ENCODE measurements at regions of chr4 and their contacts with region 1.

Region 1: GRCh38 chr4:104966349-104967033 is 180.2 kb upstream of the TET2 start:
- DNase-seq: peak; percentile 82
- H3K4me3 Mint-ChIP-seq: peak overlapping the region; percentile 71
- H3K27ac Mint-ChIP-seq: peak overlapping the region; percentile 87
- H3K4me1 Mint-ChIP-seq: peaks cover 10% of the 10 kb centered on the region
- H3K27me3 Mint-ChIP-seq: peaks cover 3% of the 10 kb centered on the region

Region 2: DNA sequence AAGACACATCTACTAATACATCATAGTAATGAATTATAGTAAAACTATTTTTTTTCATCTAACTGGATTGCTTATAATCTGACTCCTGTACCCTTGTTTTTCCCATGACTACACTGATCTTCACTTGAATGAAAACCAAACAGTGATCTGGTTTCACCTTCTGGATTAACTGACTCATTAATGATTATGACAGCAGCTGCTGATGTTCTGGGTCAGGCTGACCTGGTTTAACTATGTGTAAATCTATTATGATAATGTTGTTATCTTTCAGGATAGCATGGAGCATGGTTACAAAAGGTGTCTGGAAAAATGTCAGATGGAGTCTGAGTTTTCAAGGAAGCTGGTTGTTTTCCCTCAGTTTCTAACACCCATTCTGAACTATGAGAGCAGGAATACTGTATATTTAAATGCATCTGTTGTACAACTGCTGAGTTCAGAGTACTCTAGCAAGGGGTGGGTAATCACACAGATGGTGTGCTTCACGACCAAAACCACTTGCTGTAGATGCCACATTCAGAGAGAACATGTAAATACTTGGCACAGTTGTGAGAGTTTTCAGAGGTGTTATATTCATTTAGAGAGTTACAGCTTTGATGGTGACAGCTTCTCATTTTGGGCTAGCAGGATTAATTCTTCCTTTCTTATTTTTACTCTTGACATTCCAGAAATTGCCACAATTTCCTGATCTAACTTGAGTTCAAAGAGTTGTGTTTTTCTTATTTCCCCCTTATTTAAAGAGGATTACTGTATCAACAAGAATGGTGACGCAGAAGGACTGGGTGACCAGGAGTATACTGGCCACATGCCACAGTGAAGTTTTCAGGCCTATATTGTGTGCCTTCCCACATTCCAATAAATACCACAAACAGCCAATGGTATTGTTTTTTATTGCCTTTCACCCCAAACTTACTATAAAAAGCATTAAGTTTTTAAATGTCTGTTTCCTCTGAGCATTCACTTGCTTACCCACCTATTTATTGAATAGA is 69.5 kb before region 1 on chr4:
- intact Hi-C with region 1: loop called (anchors 2 kb)
- DNase-seq: no peak
- H3K4me3 Mint-ChIP-seq: no peak overlapping the region
- H3K27ac Mint-ChIP-seq: no peak overlapping the region
- H3K4me1 Mint-ChIP-seq: peaks cover 3% of the 10 kb centered on the region
- H3K27me3 Mint-ChIP-seq: no peaks in the 10 kb centered on the region

Region 3: DNA sequence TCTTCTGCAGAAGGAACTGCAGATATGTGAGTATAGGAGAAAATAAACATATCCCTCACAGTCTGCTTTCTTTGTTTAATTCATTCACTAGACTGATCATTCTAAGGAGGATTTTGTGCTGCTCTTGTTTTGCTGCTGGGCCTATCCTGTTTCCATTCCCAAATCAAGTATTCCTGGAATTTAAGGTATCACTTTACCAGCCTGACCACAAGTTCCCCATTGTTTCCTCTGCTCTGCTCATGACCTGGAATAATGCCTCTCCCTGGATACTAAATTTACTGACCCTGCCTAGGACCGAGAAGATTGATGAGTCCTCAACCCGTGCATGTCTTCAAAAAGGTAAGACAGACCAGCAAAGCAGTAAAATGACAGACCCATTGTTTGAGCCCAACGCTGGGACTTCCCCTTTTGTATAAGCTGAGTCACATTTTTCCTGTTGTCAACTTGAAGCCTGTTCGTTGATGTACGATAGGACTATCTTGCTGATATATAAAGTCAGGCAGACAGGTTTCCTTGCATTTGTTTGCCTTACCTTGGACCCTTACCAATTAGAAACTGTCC is 94.7 kb after region 1 on chr4:
- intact Hi-C with region 1: loop called (anchors 1 kb)
- DNase-seq: peak; percentile 81
- H3K4me3 Mint-ChIP-seq: peak overlapping the region; percentile 70
- H3K27ac Mint-ChIP-seq: peak overlapping the region; percentile 94
- H3K4me1 Mint-ChIP-seq: peaks cover 35% of the 10 kb centered on the region
- H3K27me3 Mint-ChIP-seq: peaks cover 1% of the 10 kb centered on the region

Region 4: GRCh38 chr4:105191621-105192210 is 225.2 kb after region 1 on chr4:
- intact Hi-C with region 1: loop called (anchors 10 kb)
- DNase-seq: no peak
- H3K4me3 Mint-ChIP-seq: peak overlapping the region; percentile 8
- H3K27ac Mint-ChIP-seq: peak overlapping the region; percentile 79
- H3K4me1 Mint-ChIP-seq: peaks cover 45% of the 10 kb centered on the region
- H3K27me3 Mint-ChIP-seq: no peaks in the 10 kb centered on the region

Region 5: GRCh38 chr4:105215609-105216313 is 249.3 kb after region 1 on chr4:
- intact Hi-C with region 1: loop called (anchors 5 kb)
- DNase-seq: no peak
- H3K4me3 Mint-ChIP-seq: peak overlapping the region; percentile 42
- H3K27ac Mint-ChIP-seq: peak overlapping the region; percentile 63
- H3K4me1 Mint-ChIP-seq: peaks cover 12% of the 10 kb centered on the region
- H3K27me3 Mint-ChIP-seq: no peaks in the 10 kb centered on the region

Region 6: GRCh38 chr4:105708530-105709391 is 742.3 kb after region 1 on chr4 and contains the starts of genes GSTCD and INTS12:
- intact Hi-C with region 1: loop called (anchors 5 kb)
- DNase-seq: peak; percentile 96
- H3K4me3 Mint-ChIP-seq: peak within 1 kb of the TSS; percentile 99
- H3K27ac Mint-ChIP-seq: peak within 1 kb of the TSS; percentile 94
- H3K4me1 Mint-ChIP-seq: peaks cover 15% of the 10 kb centered on the region
- H3K27me3 Mint-ChIP-seq: no peaks in the 10 kb centered on the region
- total RNA-seq, gene GSTCD: 17.5 and 22.0 TPM in 2 replicates
- total RNA-seq, gene INTS12: 23.6 and 24.4 TPM in 2 replicates